ENCODE measurements at regions of chr1 and their contacts with region 1.

Region 1: DNA sequence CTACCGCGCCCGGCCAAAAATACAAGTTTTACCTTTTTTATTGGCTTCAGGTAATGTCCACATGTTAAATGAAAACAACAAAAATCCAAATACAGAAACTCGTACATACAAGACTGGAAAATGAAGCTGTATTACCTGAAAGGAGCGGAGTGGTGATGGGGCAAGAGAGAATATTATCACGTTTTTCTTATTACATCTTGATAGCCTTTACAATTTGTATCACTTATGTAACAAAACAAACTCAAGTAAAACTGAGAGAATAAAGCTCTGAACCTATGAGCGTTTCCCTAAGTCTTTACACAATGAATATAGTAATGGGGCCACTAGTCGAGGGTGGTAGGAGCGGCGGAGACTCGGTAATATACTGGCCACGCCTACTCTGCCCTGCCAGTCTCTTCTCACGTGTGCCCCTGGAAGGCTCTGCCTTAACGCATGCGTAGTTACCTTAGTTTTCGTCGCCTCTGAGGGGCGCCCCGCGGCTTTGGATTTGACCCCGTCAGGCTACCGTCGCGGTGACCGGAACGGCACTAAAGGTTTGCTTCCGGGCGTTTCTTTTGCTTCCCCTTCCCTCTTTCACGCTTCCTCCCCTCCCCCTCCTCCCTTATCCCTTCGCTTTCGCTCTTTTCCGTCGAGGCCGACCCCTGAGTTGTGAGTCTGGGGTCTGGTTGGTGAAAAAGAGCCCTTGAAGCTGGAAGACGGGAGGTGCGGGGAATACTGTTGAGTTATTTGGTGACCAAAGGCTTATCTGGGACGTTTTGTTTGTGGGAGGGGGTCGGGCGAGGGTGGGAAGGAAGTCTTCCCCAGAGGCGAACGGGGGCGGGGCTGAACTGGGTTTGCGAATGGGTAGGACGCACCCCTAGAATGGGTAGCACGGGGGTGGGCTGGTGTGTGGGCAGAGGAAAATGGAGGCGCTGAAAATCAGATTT is at the start of gene SETDB1:
- DNase-seq: peak; percentile 95 to 97 (median 96)
- ATAC-seq: peak; percentile 98 to 99 (median 99)
- H3K4me3 ChIP-seq: peak within 1 kb of the TSS; percentile 50 to 92 (median 74)
- H3K27ac ChIP-seq: peak within 1 kb of the TSS; percentile 51 to 92 (median 79)
- H3K4me1 ChIP-seq: peaks cover 0 to 30% (median 10%) of the 10 kb centered on the region in 12 donors
- H3K27me3 ChIP-seq: no peaks in the 10 kb centered on the region
- CTCF ChIP-seq: peak in 3 of 12 donors; percentile 13 to 36 (median 26)
- POLR2A ChIP-seq: peak in 1 of 2 donors; percentile 38
- total RNA-seq, gene SETDB1: 12.5 to 28.0 (median 17.5) TPM

Region 2: GRCh38 chr1:150876119-150876454 is 50.0 kb before region 1 on chr1:
- intact Hi-C with region 1: loop called in 6 of 10 experiments (anchors 1 to 10 kb)
- DNase-seq: no peak
- ATAC-seq: peak; percentile 27 to 73 (median 61)
- H3K4me3 ChIP-seq: peak overlapping the region; percentile 74 to 99 (median 86)
- H3K27ac ChIP-seq: peak overlapping the region; percentile 86 to 100 (median 97)
- H3K4me1 ChIP-seq: peaks cover 0 to 32% (median 11%) of the 10 kb centered on the region in 12 donors
- H3K27me3 ChIP-seq: no peaks in the 10 kb centered on the region
- CTCF ChIP-seq: no peak
- POLR2A ChIP-seq: no peak

Region 3: GRCh38 chr1:150887018-150887417 is 39.1 kb before region 1 on chr1 and contains the start of gene CTXND2:
- intact Hi-C with region 1: loop called in 1 of 10 experiments (anchors 5 kb)
- DNase-seq: no peak
- ATAC-seq: no peak
- H3K4me3 ChIP-seq: no peak within 1 kb of the TSS
- H3K27ac ChIP-seq: no peak within 1 kb of the TSS
- H3K4me1 ChIP-seq: no peaks in the 10 kb centered on the region
- H3K27me3 ChIP-seq: no peaks in the 10 kb centered on the region
- CTCF ChIP-seq: no peak
- POLR2A ChIP-seq: no peak
- total RNA-seq, gene CTXND2: not detected

Region 4: GRCh38 chr1:150979092-150980056 is 53.3 kb after region 1 on chr1:
- intact Hi-C with region 1: loop called in 3 of 10 experiments (anchors 5 kb)
- DNase-seq: peak; percentile 84 to 89 (median 87)
- ATAC-seq: peak; percentile 17 to 60 (median 40)
- H3K4me3 ChIP-seq: peak overlapping the region in 7 of 12 donors; percentile 4 to 48 (median 19)
- H3K27ac ChIP-seq: peak overlapping the region in 6 of 12 donors; percentile 22 to 86 (median 42)
- H3K4me1 ChIP-seq: peaks cover 0 to 49% (median 9%) of the 10 kb centered on the region in 12 donors
- H3K27me3 ChIP-seq: no peaks in the 10 kb centered on the region
- CTCF ChIP-seq: peak; percentile 99 to 100 (median 100)
- POLR2A ChIP-seq: no peak

Region 5: GRCh38 chr1:151267760-151268159 is 341.7 kb after region 1 on chr1:
- intact Hi-C with region 1: no loop called
- DNase-seq: no peak
- ATAC-seq: no peak
- H3K4me3 ChIP-seq: no peak overlapping the region
- H3K27ac ChIP-seq: no peak overlapping the region
- H3K4me1 ChIP-seq: peaks cover 0 to 8% (median 1%) of the 10 kb centered on the region in 12 donors
- H3K27me3 ChIP-seq: no peaks in the 10 kb centered on the region
- CTCF ChIP-seq: no peak
- POLR2A ChIP-seq: no peak

Measured in heart left ventricle (tissue), 16 donors.